Sciatic nerve (tissue), 2 donors: ENCODE measurements at regions of chr2 and their contacts with region 1.

Region 1: DNA sequence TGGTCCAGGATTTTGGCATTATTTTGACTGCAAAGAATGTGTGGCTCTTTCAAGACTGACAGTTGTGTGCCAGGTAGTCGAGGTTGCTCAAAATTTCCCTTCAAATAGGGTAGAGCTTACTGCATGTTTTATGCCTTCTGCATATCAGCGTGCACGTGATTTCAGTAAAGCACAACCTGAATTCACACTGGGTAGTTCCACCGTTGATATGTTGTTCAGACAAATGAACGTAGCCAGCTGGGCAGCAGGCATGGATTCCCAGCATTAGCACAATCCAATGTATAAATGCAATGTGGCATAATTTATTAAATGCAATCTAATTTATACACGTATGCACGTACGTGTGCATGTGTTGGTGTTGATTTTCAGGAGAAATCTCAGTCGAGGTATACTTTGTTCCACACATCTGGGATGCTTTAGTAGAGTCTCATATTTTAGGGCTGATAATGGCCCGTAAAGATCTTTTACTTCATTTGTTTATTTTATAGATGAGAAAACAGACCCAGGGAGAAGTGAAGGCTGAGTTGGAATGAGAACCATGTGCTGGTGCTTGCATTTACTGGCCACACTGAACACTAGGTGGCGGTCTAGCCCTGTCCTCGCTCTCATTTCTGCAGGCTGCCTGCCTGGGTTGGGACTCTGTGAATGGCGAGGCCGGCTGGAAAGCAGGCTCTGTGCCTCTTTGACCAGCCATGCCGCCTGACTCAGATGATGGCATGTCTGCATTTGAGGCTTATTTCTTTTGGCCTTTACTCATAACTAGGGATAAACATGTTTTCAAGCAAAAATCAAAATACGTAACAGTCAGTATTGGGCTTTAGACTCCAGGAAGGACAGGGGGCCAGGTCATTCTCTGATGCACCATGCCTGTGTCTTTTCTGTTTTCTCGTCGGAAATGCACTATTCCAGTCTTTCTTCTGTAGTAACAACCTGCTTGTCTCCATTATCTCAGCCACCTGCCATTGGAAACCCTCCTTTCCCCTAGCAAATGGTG is 120.4 kb downstream of the RNF144A start:
- DNase-seq: peak; percentile 83
- ATAC-seq: peak; percentile 87

Region 2: GRCh38 chr2:6657855-6658254 is 379.8 kb before region 1 on chr2:
- intact Hi-C with region 1: no loop called
- DNase-seq: no peak
- ATAC-seq: no peak

Region 3: GRCh38 chr2:6880200-6880733 is 157.4 kb before region 1 on chr2:
- intact Hi-C with region 1: loop called (anchors 10 kb)
- DNase-seq: no peak
- ATAC-seq: no peak

Region 4: DNA sequence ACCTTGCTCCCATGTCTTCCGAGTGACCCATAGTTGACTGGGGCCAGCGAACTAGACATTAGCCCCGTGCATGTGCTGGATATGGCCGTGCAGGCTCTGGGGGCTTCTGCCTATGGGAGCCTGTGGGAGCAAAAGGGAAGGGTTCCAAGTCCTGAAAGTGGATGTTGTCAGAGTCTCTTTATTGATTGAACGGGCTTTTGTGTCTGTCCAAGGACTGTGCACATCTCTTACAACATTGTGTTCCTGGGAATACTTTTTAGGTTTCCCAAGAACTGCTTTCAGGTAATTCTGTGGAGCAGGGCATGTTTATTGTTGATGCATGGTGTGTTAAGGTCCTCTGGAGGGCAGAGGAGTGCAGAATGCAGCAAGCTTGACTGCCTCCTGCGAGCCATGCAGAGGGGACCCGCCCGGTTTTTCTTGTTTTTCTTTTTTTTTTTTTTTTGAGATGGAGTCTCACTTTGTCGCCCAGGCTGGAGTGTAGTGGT is 115.4 kb before region 1 on chr2:
- intact Hi-C with region 1: loop called (anchors 10 kb)
- DNase-seq: no peak
- ATAC-seq: no peak

Region 5: DNA sequence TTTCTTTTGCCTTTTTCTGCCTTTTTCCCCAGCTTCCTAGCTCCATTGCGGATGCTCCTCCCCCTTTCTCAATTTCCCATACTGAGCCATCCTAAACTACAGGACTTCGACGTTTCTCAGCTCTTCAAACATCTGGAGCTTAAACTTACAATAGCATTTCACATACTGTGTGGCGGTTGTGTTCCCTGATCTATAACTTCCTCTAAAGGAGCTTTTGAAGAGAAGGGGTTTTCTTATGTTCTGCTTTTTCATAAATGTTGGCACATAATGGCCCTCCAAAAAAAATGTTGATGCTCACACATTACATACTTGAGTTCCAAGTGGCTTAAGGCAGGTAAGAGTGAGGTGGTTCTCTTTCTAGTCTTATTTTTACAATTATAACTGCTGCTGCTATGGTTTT is 33.0 kb before region 1 on chr2:
- intact Hi-C with region 1: loop called (anchors 1 kb)
- DNase-seq: no peak
- ATAC-seq: no peak